Activated CD4-positive, alpha-beta T cell treated with anti-CD3 and anti-CD28 coated beads for 36 hours (primary cell): ENCODE measurements at regions of chr14 and their contacts with region 1.

Region 1: GRCh38 chr14:58571769-58572472 is 65.8 kb upstream of the DACT1 start:
- DNase-seq: peak; percentile 83
- ATAC-seq: peak; percentile 90
- H3K4me3 Mint-ChIP-seq: peak overlapping the region; percentile 45
- H3K27ac Mint-ChIP-seq: peak overlapping the region; percentile 93
- H3K4me1 Mint-ChIP-seq: peaks cover 44% of the 10 kb centered on the region
- H3K27me3 Mint-ChIP-seq: no peaks in the 10 kb centered on the region

Region 2: GRCh38 chr14:58560208-58560607 is 11.7 kb before region 1 on chr14:
- CTCF ChIA-PET with region 1: interaction called, 14 read pairs
- POLR2A ChIA-PET with region 1: interaction called, 3 read pairs
- intact Hi-C with region 1: no loop called
- DNase-seq: no peak
- ATAC-seq: peak; percentile 75
- H3K4me3 Mint-ChIP-seq: no peak overlapping the region
- H3K27ac Mint-ChIP-seq: peak overlapping the region; percentile 48
- H3K4me1 Mint-ChIP-seq: peaks cover 4% of the 10 kb centered on the region
- H3K27me3 Mint-ChIP-seq: no peaks in the 10 kb centered on the region

Region 3: DNA sequence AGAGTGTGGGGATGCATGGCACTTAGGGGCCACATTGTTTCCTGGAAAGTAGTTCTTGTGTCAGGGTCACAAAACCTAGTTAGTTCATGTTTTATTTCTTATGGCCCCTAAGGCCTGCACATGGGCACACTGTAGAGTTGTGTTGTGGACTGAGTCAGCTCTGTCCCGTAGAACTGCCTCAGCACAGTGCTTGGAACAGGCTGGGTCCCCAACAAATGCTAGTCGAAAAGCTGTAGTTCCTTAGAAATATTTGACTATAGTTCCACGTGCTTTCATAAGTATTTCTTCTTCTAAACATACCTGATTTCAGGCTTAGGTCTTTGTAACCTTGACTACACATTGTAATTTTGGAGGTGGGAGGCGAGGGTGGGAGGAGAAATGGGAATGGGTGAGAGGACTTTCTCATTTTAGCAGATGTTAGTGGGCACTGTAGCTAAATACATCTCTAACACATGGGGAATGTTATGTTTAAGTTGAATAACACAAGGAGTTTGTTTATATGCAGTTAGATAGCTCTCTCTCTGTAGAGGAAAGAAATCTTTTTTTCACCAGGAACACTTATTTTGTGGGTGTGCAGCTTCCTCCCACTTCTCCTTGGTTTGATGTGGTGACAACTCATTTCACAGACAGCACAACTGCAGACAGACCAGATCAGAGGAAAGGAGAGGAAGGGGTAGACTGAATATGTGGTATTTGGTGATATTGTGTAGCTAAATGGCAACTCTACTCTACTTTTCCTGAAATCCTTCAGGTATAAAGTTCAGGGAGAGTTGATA is 26.3 kb after region 1 on chr14:
- CTCF ChIA-PET with region 1: interaction called, 3 read pairs
- POLR2A ChIA-PET with region 1: no interaction called
- intact Hi-C with region 1: loop called (anchors 1 kb)
- DNase-seq: no peak
- ATAC-seq: peak; percentile 86
- H3K4me3 Mint-ChIP-seq: no peak overlapping the region
- H3K27ac Mint-ChIP-seq: peak overlapping the region; percentile 31
- H3K4me1 Mint-ChIP-seq: peaks cover 34% of the 10 kb centered on the region
- H3K27me3 Mint-ChIP-seq: peaks cover 9% of the 10 kb centered on the region

Region 4: GRCh38 chr14:58752771-58753201 is 180.9 kb after region 1 on chr14:
- CTCF ChIA-PET with region 1: no interaction called
- POLR2A ChIA-PET with region 1: no interaction called
- intact Hi-C with region 1: no loop called
- DNase-seq: no peak
- ATAC-seq: no peak
- H3K4me3 Mint-ChIP-seq: no peak overlapping the region
- H3K27ac Mint-ChIP-seq: no peak overlapping the region
- H3K4me1 Mint-ChIP-seq: peaks cover 9% of the 10 kb centered on the region
- H3K27me3 Mint-ChIP-seq: no peaks in the 10 kb centered on the region